OCI-LY7 (cell line): ENCODE measurements at regions of chr4 and their contacts with region 1.

Region 1: DNA sequence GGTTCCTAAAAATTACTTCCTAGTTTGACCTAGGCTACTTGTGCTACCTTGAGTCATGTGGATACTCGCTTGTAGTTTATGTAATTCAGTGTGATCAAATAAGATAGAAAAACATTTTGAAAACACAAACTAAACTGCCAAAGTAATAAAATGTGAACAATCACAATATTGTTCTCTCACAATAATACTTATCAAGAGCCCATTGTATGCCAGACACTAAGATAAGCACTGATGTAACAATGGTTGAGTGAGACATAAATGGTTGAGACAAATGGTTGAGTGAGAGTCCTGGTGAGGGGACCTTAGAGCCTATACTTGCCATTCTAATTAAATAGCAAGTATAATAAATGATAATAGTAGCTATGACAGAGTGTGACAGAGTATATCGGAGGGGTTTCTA is 41.7 kb downstream of the RFC1 start:
- DNase-seq: no peak
- H3K4me3 ChIP-seq: no peak overlapping the region
- H3K27ac ChIP-seq: no peak overlapping the region
- H3K4me1 ChIP-seq: no peaks in the 10 kb centered on the region
- CTCF ChIP-seq: no peak

Region 2: DNA sequence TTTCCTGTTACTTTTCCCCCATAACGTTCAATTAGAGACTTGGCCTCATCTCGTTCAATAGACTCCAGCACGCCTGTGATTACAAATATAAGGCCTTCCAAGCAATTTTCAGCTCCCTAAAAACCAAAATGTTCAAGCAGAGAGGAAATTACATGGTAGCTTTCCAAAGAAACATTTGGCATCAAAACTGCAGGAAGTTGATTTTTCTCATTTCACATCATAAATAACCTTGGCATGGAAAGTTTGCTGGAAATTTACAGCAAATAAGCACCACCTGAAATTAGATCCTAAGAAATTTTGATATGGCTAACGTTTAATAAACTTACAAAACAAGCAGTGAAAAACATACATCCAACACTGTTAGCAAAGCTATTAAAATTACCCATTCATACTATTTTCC is 11.6 kb before region 1 on chr4:
- CTCF ChIA-PET with region 1: no interaction called
- POLR2A ChIA-PET with region 1: interaction called, 14 read pairs
- intact Hi-C with region 1: no loop called
- DNase-seq: no peak
- H3K4me3 ChIP-seq: no peak overlapping the region
- H3K27ac ChIP-seq: no peak overlapping the region
- H3K4me1 ChIP-seq: no peaks in the 10 kb centered on the region
- CTCF ChIP-seq: no peak